Natural killer cell (primary cell): ENCODE measurements at regions of chr14 and their contacts with region 1.

Region 1: DNA sequence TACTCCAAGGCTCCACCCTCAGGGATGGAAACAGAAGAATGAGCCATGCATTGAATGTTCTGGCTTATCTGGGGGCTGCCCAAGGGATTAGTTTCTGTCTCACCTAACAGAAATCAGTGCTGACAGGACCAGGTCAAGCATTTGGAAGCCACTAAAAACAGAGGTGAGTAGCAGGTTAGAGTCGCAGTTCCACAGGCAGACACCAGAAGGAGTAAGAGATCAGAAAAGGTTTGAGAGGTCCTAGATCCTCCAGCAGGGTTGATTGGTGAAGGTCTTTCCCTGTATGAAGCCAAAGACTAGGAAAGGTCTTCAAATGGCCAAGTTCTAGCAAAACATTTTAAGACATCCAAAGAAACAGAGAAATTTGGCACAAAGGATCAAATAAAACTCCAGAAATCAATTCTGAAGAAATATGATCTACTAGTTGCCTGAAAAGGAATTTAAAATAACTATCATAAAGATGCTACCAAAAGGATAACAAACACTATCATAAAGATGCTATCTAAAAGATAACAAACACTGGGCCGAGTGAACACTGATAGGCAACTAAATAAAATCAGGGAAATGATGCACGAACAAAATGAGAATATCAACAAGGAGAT is 19.5 kb upstream of the TTC9 start:
- DNase-seq: peak in 1 of 2 donors; percentile 79
- ATAC-seq: peak; percentile 60 to 88 (median 67)
- H3K4me3 ChIP-seq: no peak overlapping the region
- H3K4me3 Mint-ChIP-seq: no peak overlapping the region
- H3K27ac ChIP-seq: no peak overlapping the region
- H3K27ac Mint-ChIP-seq: no peak overlapping the region
- H3K4me1 ChIP-seq: no peaks in the 10 kb centered on the region
- H3K4me1 Mint-ChIP-seq: no peaks in the 10 kb centered on the region
- H3K27me3 ChIP-seq: peaks cover 2% of the 10 kb centered on the region
- H3K27me3 Mint-ChIP-seq: peaks cover 22 to 60% of the 10 kb centered on the region in 2 donors
- CTCF ChIP-seq: peak; percentile 76

Region 2: DNA sequence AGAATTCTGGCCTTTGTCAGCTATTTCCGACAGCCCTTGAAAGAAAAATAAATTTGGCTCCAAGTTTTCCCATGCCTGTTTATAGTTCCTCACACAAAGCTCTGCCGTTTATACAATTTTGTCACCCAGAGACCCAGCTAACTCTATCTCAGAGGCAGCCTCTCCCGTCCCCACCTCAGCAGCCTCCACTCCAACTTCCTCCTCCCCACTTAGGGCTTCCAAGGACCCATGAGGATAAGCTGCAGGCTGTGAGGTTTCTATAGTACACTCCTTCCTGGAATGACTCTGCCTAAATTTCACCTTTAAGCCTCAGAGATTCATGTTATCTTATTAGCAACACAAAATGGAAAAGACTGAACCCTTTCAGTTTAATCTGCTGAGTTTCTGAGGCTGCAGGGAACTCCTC is 91.3 kb after region 1 on chr14:
- intact Hi-C with region 1: loop called (anchors 1 kb)
- DNase-seq: no peak
- ATAC-seq: no peak
- H3K4me3 ChIP-seq: no peak overlapping the region
- H3K4me3 Mint-ChIP-seq: no peak overlapping the region
- H3K27ac ChIP-seq: no peak overlapping the region
- H3K27ac Mint-ChIP-seq: no peak overlapping the region
- H3K4me1 ChIP-seq: peaks cover 3% of the 10 kb centered on the region
- H3K4me1 Mint-ChIP-seq: peaks cover 0 to 5% of the 10 kb centered on the region in 2 donors
- H3K27me3 ChIP-seq: no peaks in the 10 kb centered on the region
- H3K27me3 Mint-ChIP-seq: peaks cover 6 to 17% of the 10 kb centered on the region in 2 donors
- CTCF ChIP-seq: no peak

Region 3: DNA sequence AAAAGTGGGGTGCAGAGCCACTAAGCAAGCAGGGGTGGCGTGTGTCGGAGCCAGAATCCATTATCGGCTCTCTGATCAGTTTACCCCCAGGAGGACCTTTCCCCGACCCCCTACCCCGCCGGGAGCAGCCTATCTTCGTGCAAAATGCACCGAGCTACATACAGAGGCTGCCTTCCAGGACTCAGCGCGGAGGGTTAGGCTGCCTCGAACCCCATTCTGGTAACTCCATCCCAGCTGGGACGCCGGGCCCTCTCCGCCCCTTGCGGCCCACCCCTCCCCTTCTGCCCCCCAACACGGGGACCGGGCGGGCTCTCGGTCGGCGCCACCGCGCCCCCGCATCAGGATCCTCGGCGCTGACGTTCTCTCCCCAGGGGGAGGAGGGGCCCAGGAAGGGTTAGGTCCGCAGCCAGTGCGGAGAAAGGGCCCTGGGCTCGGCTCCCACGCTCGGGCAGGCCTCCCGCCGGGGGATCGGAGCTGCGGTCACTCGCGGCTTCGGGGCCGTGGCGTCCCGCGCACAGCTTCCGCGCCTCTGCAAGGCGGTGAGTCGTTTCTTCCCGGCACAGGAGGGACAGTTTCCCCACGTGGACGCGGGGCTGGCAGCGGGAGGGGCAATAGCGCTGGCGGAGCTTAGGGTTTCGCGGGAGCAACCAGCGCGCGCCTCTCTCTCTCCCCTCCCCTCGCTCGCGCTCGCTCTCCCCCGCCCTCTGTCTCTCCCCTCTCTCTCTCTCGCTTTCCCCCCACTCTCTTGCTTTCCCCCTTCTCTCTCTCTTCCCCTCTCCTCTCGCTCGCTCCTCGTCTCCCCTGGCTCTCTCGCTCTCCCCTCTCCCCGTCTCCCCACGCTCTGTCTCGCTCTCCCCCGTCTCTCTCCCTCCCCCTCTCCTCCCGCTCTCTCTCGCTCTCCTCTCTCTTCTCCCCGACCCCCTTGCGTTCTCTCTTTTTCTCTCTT is 199.6 kb after region 1 on chr14:
- intact Hi-C with region 1: loop called (anchors 1 kb)
- DNase-seq: peak; percentile 47 to 71
- ATAC-seq: peak; percentile 42 to 47 (median 46)
- H3K4me3 ChIP-seq: peak overlapping the region; percentile 52
- H3K4me3 Mint-ChIP-seq: peak overlapping the region; percentile 91
- H3K27ac ChIP-seq: no peak overlapping the region
- H3K27ac Mint-ChIP-seq: peak overlapping the region in 1 of 2 donors; percentile 79
- H3K4me1 ChIP-seq: peaks cover 25% of the 10 kb centered on the region
- H3K4me1 Mint-ChIP-seq: peaks cover 14 to 20% of the 10 kb centered on the region in 2 donors
- H3K27me3 ChIP-seq: peaks cover 19% of the 10 kb centered on the region
- H3K27me3 Mint-ChIP-seq: peaks cover 17 to 29% of the 10 kb centered on the region in 2 donors
- CTCF ChIP-seq: no peak